MCF 10A (cell line): ENCODE measurements at regions of chr2 and their contacts with region 1.

Region 1: DNA sequence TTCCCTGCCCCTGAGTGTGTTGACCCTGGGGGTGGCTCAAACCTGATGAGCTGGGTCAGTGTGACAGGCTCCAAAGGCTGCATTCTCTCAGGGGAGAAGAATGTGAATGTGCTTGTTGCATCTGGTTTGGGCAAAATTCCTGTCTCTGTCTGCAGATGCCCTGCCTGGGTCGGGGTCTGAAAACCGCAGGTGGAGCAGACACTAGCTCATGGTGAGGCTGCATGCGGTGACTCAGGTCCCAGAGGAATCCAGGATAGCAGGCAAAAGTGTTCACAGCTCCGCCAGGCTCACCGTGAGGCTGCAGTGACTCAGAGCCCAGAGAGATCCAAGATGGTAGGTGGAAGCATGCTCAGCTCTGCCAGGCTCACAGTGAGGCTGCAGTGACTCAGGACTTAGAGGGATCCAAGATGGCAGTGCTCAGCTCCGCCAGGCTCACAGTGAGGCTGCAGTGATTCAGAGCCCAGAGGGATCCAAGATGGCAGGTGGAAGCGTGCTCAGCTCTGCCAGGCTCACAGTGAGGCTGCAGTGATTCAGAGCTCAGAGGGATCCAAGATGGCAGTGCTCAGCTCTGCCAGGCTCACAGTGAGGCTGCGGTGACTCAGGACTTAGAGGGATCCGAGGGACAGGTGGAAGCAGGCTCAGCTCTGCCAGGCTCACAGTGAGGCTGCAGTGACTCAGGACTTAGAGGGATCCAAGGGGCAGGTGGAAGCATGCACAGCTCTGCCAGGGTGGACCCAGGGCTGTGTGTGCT is 200.5 kb downstream of the ACKR3 start:
- DNase-seq: peak; percentile 93
- H3K4me3 Mint-ChIP-seq: peak overlapping the region; percentile 40
- H3K27ac Mint-ChIP-seq: peak overlapping the region; percentile 92
- H3K4me1 Mint-ChIP-seq: peaks cover 22% of the 10 kb centered on the region
- H3K27me3 Mint-ChIP-seq: no peaks in the 10 kb centered on the region
- CTCF ChIP-seq: no peak

Region 2: GRCh38 chr2:236180831-236181453 is 589.2 kb before region 1 on chr2:
- CTCF ChIA-PET with region 1: no interaction called
- POLR2A ChIA-PET with region 1: no interaction called
- intact Hi-C with region 1: no loop called
- DNase-seq: peak; percentile 75
- H3K4me3 Mint-ChIP-seq: no peak overlapping the region
- H3K27ac Mint-ChIP-seq: no peak overlapping the region
- H3K4me1 Mint-ChIP-seq: peaks cover 13% of the 10 kb centered on the region
- H3K27me3 Mint-ChIP-seq: no peaks in the 10 kb centered on the region
- CTCF ChIP-seq: peak; percentile 57

Region 3: GRCh38 chr2:236691799-236692167 is 78.3 kb before region 1 on chr2:
- CTCF ChIA-PET with region 1: interaction called, 3 read pairs
- POLR2A ChIA-PET with region 1: interaction called, 12 read pairs
- intact Hi-C with region 1: no loop called
- DNase-seq: peak; percentile 41
- H3K4me3 Mint-ChIP-seq: no peak overlapping the region
- H3K27ac Mint-ChIP-seq: peak overlapping the region; percentile 69
- H3K4me1 Mint-ChIP-seq: peaks cover 48% of the 10 kb centered on the region
- H3K27me3 Mint-ChIP-seq: no peaks in the 10 kb centered on the region
- CTCF ChIP-seq: no peak

Region 4: DNA sequence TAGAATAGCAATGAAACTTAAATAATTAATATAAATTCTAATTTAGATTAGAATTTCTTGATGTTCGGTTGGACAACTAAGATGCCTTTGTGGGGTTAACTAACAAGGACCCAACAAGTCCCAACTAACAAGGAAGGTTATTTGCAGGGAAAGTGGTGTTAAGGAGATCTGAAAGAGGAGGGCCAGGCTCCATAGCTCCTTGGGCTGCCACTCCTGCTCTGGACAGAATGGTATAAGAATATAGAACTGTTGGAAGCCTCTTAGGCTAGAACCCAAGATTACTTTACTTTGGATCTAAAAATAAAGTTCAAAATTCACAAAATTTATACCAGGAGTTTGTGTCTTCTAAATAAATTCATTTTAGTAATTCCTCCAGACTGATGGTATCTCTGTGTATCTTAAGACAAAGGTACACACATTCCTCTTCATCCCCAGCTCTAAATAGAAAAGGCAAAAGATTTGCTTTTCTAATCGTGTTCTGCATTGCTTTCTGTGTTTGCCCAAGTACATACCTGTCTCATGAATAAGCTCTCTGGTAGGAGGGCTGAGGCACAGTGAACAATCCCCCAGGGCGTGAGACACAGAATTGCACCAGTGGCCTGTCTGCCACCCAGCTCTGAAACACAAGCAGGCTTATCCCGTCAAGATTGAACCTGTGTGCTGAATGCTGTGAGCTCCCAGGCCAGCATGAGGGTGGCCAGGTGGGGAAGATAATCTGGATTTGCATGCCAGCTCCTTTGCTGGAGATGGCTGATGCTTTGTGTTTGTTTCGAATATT is 24.5 kb before region 1 on chr2:
- CTCF ChIA-PET with region 1: no interaction called
- POLR2A ChIA-PET with region 1: interaction called, 10 read pairs
- intact Hi-C with region 1: no loop called
- DNase-seq: peak; percentile 87
- H3K4me3 Mint-ChIP-seq: peak overlapping the region; percentile 17
- H3K27ac Mint-ChIP-seq: peak overlapping the region; percentile 74
- H3K4me1 Mint-ChIP-seq: peaks cover 57% of the 10 kb centered on the region
- H3K27me3 Mint-ChIP-seq: no peaks in the 10 kb centered on the region
- CTCF ChIP-seq: no peak

Region 5: GRCh38 chr2:237045432-237045831 is 275.3 kb after region 1 on chr2:
- CTCF ChIA-PET with region 1: no interaction called
- POLR2A ChIA-PET with region 1: no interaction called
- intact Hi-C with region 1: no loop called
- DNase-seq: no peak
- H3K4me3 Mint-ChIP-seq: no peak overlapping the region
- H3K27ac Mint-ChIP-seq: no peak overlapping the region
- H3K4me1 Mint-ChIP-seq: no peaks in the 10 kb centered on the region
- H3K27me3 Mint-ChIP-seq: peaks cover 8% of the 10 kb centered on the region
- CTCF ChIP-seq: no peak